CD4-positive, alpha-beta memory T cell (primary cell): ENCODE measurements at regions of chr1 and their contacts with region 1.

Region 1: GRCh38 chr1:209769171-209769904 is 13.5 kb downstream of the TRAF3IP3 start:
- DNase-seq: peak; percentile 74 to 88 (median 78)
- H3K4me3 ChIP-seq: peak overlapping the region; percentile 83 to 84
- H3K4me3 Mint-ChIP-seq: no peak overlapping the region
- H3K27ac ChIP-seq: peak overlapping the region; percentile 79
- H3K27ac Mint-ChIP-seq: no peak overlapping the region
- H3K4me1 ChIP-seq: peaks cover 69% of the 10 kb centered on the region
- H3K4me1 Mint-ChIP-seq: peaks cover 1 to 31% (median 23%) of the 10 kb centered on the region in 4 donors
- H3K27me3 ChIP-seq: no peaks in the 10 kb centered on the region
- H3K27me3 Mint-ChIP-seq: no peaks in the 10 kb centered on the region

Region 2: DNA sequence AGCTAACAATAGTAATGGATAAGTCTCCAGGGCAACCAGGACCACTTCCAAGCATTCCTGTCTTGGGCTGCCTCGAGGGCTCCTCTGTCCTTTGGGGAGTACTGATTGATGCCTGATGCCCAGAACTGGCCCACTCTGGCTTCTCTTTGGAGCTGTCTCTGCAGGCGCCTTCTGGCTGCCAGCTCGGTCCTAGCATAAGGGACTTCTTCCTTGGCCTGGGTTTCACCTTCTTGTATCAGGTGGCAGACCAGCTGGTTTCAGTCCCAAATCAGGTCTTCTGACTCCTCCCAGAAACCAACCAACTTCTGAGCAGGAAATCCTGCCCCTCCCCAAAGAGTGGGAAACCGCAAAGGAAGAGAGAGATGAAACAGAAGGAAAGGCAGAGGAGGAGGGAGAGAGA is 83.5 kb before region 1 on chr1:
- CTCF ChIA-PET with region 1: interaction called, 10 read pairs
- POLR2A ChIA-PET with region 1: interaction called, 11 read pairs
- intact Hi-C with region 1: no loop called
- DNase-seq: peak; percentile 33 to 56 (median 54)
- H3K4me3 ChIP-seq: peak overlapping the region; percentile 23 to 32
- H3K4me3 Mint-ChIP-seq: peak overlapping the region; percentile 68 to 88 (median 78)
- H3K27ac ChIP-seq: peak overlapping the region; percentile 14
- H3K27ac Mint-ChIP-seq: peak overlapping the region; percentile 36 to 89 (median 81)
- H3K4me1 ChIP-seq: peaks cover 46% of the 10 kb centered on the region
- H3K4me1 Mint-ChIP-seq: peaks cover 39 to 52% (median 41%) of the 10 kb centered on the region in 4 donors
- H3K27me3 ChIP-seq: no peaks in the 10 kb centered on the region
- H3K27me3 Mint-ChIP-seq: no peaks in the 10 kb centered on the region

Region 3: GRCh38 chr1:209692745-209693504 is 76.4 kb before region 1 on chr1:
- CTCF ChIA-PET with region 1: interaction called, 10 read pairs
- POLR2A ChIA-PET with region 1: interaction called, 7 read pairs
- intact Hi-C with region 1: loop called (anchors 2 kb)
- DNase-seq: peak; percentile 60 to 68 (median 62)
- H3K4me3 ChIP-seq: no peak overlapping the region
- H3K4me3 Mint-ChIP-seq: peak overlapping the region in 1 of 8 donors; percentile 9
- H3K27ac ChIP-seq: no peak overlapping the region
- H3K27ac Mint-ChIP-seq: peak overlapping the region in 3 of 7 donors; percentile 43 to 66 (median 57)
- H3K4me1 ChIP-seq: peaks cover 15% of the 10 kb centered on the region
- H3K4me1 Mint-ChIP-seq: peaks cover 18 to 25% (median 22%) of the 10 kb centered on the region in 4 donors
- H3K27me3 ChIP-seq: no peaks in the 10 kb centered on the region
- H3K27me3 Mint-ChIP-seq: peaks cover 0 to 2% of the 10 kb centered on the region in 2 donors

Region 4: DNA sequence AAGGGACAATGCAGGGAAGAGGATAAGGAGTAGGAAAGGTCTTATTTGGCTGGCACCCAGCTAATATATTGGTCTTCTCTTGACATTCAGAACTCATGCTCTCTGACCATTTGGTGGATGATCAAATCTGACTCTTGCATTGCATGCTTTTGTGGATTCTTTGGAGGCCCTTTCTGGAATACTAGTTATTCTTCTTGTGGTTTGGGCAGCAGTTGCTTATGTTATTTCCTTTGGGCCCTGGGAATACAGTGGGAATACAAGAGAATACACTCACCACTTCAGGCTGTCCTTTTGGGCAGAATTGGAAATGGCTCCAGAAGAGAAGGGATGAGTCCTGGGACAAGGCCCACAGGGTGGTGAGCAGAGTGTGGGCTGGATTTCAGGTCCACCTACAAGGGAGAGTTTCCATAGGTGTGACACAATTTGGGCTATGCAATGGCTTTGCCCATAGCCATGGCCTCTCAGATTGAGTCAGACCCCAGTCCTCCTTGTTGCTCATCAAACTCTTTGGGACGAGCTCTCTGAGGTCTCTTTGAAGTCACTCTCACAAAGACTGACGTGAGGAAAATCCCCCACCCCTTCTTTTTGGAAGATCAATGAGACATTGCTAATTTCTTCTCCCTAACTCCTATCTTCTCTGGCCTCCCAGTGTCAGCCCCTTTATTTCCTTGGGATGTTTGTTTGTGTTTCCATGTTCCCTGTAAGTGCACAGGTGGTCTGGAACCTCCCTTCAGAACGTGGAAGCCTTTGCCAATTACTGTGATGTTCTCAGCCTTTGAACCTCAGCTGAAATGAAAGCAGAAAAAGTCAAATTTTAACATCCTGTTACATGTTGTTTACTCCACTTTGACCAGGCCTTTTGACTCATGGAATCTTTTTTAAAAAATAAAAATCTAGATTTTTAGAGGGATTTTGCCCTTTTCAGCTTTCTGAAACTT is 45.3 kb before region 1 on chr1:
- CTCF ChIA-PET with region 1: interaction called, 4 read pairs
- POLR2A ChIA-PET with region 1: interaction called, 11 read pairs
- intact Hi-C with region 1: no loop called
- DNase-seq: peak in 1 of 5 donors; percentile 5
- H3K4me3 ChIP-seq: no peak overlapping the region
- H3K4me3 Mint-ChIP-seq: peak overlapping the region in 4 of 8 donors; percentile 21 to 72 (median 44)
- H3K27ac ChIP-seq: no peak overlapping the region
- H3K27ac Mint-ChIP-seq: peak overlapping the region in 5 of 7 donors; percentile 36 to 91 (median 88)
- H3K4me1 ChIP-seq: peaks cover 19% of the 10 kb centered on the region
- H3K4me1 Mint-ChIP-seq: peaks cover 11 to 22% (median 14%) of the 10 kb centered on the region in 4 donors
- H3K27me3 ChIP-seq: no peaks in the 10 kb centered on the region
- H3K27me3 Mint-ChIP-seq: no peaks in the 10 kb centered on the region

Region 5: GRCh38 chr1:209755926-209756614 is 13.3 kb before region 1 on chr1 and contains the start of gene TRAF3IP3:
- CTCF ChIA-PET with region 1: interaction called, 385 read pairs
- POLR2A ChIA-PET with region 1: interaction called, 1,778 read pairs
- intact Hi-C with region 1: loop called (anchors 1 kb)
- DNase-seq: peak; percentile 78 to 89 (median 83)
- H3K4me3 ChIP-seq: peak within 1 kb of the TSS; percentile 72 to 81
- H3K4me3 Mint-ChIP-seq: peak within 1 kb of the TSS; percentile 91 to 100 (median 98)
- H3K27ac ChIP-seq: peak within 1 kb of the TSS; percentile 72
- H3K27ac Mint-ChIP-seq: peak within 1 kb of the TSS; percentile 87 to 96 (median 94)
- H3K4me1 ChIP-seq: peaks cover 82% of the 10 kb centered on the region
- H3K4me1 Mint-ChIP-seq: peaks cover 53 to 95% (median 71%) of the 10 kb centered on the region in 4 donors
- H3K27me3 ChIP-seq: no peaks in the 10 kb centered on the region
- H3K27me3 Mint-ChIP-seq: no peaks in the 10 kb centered on the region
- total RNA-seq, gene TRAF3IP3: 571 to 574 TPM

Region 6: DNA sequence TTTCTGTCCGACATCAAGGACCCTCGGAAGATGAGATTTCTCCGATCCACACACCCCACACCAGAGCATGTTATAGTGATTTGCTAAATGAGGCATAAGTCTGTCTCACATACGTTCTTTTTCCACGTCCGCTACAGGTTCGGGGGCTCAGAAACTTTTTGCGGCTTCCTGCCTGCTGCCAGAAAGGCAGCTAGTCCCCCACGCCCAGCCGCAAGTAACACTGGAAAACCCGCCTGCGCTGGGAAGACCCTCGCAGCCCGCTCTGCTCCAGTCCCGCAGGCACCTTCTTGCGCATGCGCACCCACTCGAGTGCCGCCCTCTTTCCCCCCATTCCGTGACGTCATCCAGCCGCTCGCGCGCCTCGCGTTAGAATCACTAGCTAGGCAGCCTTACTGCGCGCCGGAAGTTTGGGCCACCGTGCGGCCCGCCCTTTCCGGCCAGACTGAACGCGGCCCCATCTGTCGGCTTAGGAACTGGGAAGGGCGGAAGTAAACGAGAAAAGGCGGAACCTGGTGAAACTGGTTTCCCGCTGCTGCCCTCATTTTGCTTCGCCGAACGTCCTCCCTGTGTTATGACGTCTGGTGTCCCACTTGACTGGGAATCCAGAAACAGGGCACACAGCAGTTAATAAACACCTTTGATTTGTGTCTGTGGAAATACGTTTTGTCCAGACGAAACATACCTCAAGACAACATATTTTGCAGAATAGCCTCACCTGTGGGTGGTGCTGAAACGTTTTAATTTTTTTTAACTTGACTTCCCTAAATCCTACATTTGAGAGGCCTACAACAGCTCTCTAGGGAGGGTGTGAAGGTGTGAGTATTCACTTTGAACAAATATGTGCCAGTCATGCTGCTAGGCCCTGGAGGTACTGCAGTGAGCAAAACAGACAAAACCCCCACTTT is 15.2 kb after region 1 on chr1 and contains the start of gene C1orf74:
- CTCF ChIA-PET with region 1: interaction called, 28 read pairs
- POLR2A ChIA-PET with region 1: interaction called, 1,778 read pairs
- intact Hi-C with region 1: loop called (anchors 1 kb)
- DNase-seq: peak; percentile 97 to 99 (median 98)
- H3K4me3 ChIP-seq: peak within 1 kb of the TSS; percentile 49 to 72
- H3K4me3 Mint-ChIP-seq: peak within 1 kb of the TSS; percentile 92 to 99 (median 96)
- H3K27ac ChIP-seq: peak within 1 kb of the TSS; percentile 67
- H3K27ac Mint-ChIP-seq: peak within 1 kb of the TSS; percentile 95 to 100 (median 99)
- H3K4me1 ChIP-seq: peaks cover 21% of the 10 kb centered on the region
- H3K4me1 Mint-ChIP-seq: peaks cover 15 to 35% (median 33%) of the 10 kb centered on the region in 4 donors
- H3K27me3 ChIP-seq: no peaks in the 10 kb centered on the region
- H3K27me3 Mint-ChIP-seq: peaks cover 0 to 3% of the 10 kb centered on the region in 2 donors
- total RNA-seq, gene C1orf74: 1.2 TPM

Region 7: DNA sequence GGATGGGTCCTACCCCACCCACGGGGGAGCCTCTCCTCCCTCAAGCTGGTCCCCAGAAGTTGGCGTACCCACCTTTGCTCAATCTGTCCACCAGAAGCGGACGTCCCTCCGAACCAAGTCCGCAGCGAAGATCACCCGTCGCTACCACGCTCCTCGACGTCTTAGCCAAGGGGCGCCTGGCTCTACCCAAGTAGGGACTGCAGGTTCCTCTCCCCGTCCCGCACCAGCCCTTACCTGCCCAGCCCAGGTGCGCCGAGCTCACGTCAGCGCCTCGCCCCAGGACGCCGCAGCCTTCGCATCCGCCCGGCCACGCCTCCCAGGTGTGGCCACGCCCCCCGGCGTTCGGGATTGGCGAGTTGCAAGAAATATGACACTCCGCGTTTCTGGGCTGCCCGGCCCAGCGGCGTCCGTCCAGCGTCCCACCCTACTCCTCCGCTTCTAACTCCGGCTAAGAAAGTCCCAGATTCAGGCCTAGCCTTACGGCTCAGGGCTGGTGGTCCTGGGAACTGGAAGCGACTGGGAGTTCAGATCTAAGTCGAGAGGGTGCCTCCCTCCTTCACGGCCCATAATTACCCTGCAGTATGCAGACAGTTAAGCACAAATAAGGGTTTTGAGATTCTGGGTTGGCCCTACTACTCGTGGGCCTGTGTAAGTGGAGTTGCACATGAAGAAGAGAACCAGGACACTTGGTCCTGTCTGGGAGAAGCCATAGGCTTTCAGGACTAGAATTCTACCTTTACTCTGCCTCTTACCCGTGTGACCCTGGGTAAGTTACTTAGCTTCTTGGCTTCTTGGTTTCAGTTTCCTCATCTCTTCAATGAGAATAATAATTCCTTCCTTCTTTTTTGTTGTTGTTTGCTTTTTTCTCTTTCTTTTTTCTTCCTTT is 36.8 kb after region 1 on chr1 and contains the start of gene IRF6:
- CTCF ChIA-PET with region 1: no interaction called
- POLR2A ChIA-PET with region 1: interaction called, 13 read pairs
- intact Hi-C with region 1: no loop called
- DNase-seq: peak; percentile 60 to 71 (median 69)
- H3K4me3 ChIP-seq: peak within 1 kb of the TSS in 1 of 2 donors; percentile 59
- H3K4me3 Mint-ChIP-seq: peak within 1 kb of the TSS; percentile 91 to 97 (median 92)
- H3K27ac ChIP-seq: no peak within 1 kb of the TSS
- H3K27ac Mint-ChIP-seq: peak within 1 kb of the TSS; percentile 75 to 94 (median 91)
- H3K4me1 ChIP-seq: peaks cover 12% of the 10 kb centered on the region
- H3K4me1 Mint-ChIP-seq: peaks cover 6 to 13% (median 10%) of the 10 kb centered on the region in 4 donors
- H3K27me3 ChIP-seq: no peaks in the 10 kb centered on the region
- H3K27me3 Mint-ChIP-seq: peaks cover 0 to 5% of the 10 kb centered on the region in 2 donors
- total RNA-seq, gene IRF6: 0.15 to 0.50 TPM